ENCODE measurements at regions of chr1 and their contacts with region 1.

Region 1: DNA sequence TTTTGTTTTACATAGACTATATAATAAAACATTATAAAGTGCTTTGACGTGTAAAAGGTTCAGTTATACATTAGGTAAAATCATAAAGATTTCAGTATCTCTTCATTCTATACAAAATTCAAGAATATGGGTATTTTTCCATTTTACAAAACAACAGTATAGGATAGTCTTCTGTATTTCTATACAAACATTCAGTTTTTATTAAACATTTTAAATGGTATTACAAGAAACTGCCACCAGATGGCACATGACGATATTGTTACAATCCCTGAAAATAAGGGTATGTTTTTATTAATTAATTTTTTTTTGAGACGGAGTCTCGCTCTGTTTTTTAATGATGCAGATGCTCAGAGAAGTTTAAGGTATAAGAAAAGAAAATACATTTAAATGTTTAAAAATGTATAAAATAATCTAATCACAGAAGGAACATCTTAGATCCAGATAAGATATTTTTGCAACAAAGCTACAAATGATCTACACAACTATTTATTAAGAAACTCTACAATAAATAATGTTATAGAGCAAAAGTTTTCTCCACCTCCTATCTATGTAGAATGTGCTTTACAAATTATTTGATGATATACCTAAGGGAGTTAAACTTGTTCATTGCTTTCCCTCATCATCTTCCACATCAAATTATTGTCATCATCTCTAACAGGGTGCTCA is 23.5 kb upstream of the RSBN1 start:
- DNase-seq: peak; percentile 42
- CTCF ChIP-seq: peak; percentile 35

Region 2: GRCh38 chr1:113793878-113794834 is 41.6 kb before region 1 on chr1:
- CTCF ChIA-PET with region 1: no interaction called
- POLR2A ChIA-PET with region 1: no interaction called
- DNase-seq: no peak
- CTCF ChIP-seq: no peak

Region 3: GRCh38 chr1:113859478-113860175 is 23.9 kb after region 1 on chr1:
- CTCF ChIA-PET with region 1: interaction called, 20 read pairs
- POLR2A ChIA-PET with region 1: no interaction called
- DNase-seq: peak; percentile 53
- CTCF ChIP-seq: no peak

Region 4: DNA sequence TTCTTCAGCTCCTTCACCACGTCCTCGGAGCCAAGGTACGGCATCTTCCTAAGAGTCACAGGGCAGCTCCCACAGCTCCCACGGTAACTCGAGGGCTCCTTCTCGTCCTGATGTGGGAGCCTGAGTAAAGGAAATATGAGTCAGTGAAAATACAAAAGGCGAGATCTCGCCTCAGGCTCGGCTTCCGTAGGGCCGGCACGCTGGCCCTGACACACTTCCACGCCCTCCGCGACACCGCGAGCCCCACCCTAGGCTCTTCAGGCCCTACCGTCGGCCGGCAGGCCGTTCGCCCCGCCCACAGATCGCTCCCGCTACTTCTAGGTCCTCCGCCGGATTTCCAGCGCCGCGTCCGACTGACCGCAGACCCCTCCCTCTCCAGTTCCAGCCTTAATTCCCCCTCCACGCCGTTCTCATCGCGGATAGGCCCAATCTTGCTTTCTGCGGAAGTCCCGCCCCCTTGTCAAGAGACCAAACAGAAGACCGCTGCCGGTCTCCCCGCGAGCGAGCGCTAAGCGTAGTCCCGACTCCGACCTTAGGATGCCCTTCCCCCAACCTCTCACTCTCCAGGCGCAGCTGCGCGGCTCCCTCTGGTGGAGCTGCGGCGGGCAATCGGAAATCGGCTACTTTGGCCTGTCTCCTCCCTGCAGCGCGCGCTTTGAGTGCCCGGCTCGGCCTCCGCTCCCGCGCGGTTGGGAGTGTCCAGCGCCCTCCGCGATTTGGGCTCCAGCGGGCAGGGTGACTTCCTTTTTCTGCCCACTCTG is 69.1 kb after region 1 on chr1 and contains the starts of genes AP4B1 and DCLRE1B:
- CTCF ChIA-PET with region 1: interaction called, 34 read pairs
- POLR2A ChIA-PET with region 1: interaction called, 4 read pairs
- DNase-seq: peak; percentile 97
- CTCF ChIP-seq: peak; percentile 89

Region 5: GRCh38 chr1:113912594-113913311 is 77.0 kb after region 1 on chr1:
- CTCF ChIA-PET with region 1: interaction called, 12 read pairs
- POLR2A ChIA-PET with region 1: no interaction called
- DNase-seq: no peak
- CTCF ChIP-seq: no peak

Region 6: DNA sequence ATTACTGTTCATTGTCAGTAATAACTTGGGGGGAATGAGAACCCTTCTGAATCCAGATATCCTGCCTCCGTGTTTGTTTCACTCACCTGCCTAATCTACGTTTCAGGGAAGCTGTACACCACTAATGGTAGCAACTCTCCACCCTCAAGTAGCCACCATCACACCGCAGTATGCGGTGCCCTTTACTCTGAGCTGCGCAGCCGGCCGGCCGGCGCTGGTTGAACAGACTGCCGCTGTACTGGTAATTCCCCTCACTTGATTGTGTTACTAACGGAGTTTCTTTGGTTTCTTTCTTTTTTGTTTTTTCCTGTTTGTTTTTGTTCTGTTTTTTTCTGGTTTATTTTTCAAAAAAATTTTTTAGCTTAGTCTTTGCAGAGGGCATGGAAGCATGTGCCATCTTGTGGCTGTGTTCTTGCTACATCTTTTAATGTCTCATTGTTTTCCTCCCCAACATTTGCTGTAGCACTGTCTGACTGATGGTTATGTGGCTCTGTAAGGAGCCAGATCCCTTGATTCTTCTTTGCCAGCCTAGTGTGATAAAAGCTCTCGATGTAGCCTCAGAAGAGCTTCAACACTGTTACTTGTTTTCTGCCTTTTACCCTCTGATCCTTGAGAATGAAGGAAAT is 127.6 kb after region 1 on chr1:
- CTCF ChIA-PET with region 1: interaction called, 14 read pairs
- POLR2A ChIA-PET with region 1: no interaction called
- DNase-seq: no peak
- CTCF ChIP-seq: no peak